ENCODE measurements at regions of chr15 and their contacts with region 1.

Region 1: GRCh38 chr15:100873029-100873677 is 6.5 kb upstream of the ALDH1A3 start:
- DNase-seq: peak; percentile 71 to 77
- H3K4me3 ChIP-seq: no peak overlapping the region
- H3K4me3 Mint-ChIP-seq: no peak overlapping the region
- H3K27ac Mint-ChIP-seq: no peak overlapping the region
- H3K4me1 ChIP-seq: peaks cover 8% of the 10 kb centered on the region; the same call in 1 of the 2 replicates
- H3K4me1 Mint-ChIP-seq: peaks cover 5% of the 10 kb centered on the region
- H3K27me3 ChIP-seq: no peaks in the 10 kb centered on the region
- H3K27me3 Mint-ChIP-seq: no peaks in the 10 kb centered on the region
- CTCF ChIP-seq: peak; percentile 70 to 82

Region 2: GRCh38 chr15:100663086-100663914 is 209.9 kb before region 1 on chr15:
- CTCF ChIA-PET with region 1: interaction called, 3 read pairs
- POLR2A ChIA-PET with region 1: no interaction called
- intact Hi-C with region 1: loop called (anchors 2 kb)
- DNase-seq: peak in 1 of 2 experiments; percentile 25
- H3K4me3 ChIP-seq: no peak overlapping the region
- H3K4me3 Mint-ChIP-seq: no peak overlapping the region
- H3K27ac Mint-ChIP-seq: no peak overlapping the region
- H3K4me1 ChIP-seq: no peaks in the 10 kb centered on the region
- H3K4me1 Mint-ChIP-seq: no peaks in the 10 kb centered on the region
- H3K27me3 ChIP-seq: no peaks in the 10 kb centered on the region
- H3K27me3 Mint-ChIP-seq: no peaks in the 10 kb centered on the region
- CTCF ChIP-seq: peak; percentile 23 to 47

Region 3: DNA sequence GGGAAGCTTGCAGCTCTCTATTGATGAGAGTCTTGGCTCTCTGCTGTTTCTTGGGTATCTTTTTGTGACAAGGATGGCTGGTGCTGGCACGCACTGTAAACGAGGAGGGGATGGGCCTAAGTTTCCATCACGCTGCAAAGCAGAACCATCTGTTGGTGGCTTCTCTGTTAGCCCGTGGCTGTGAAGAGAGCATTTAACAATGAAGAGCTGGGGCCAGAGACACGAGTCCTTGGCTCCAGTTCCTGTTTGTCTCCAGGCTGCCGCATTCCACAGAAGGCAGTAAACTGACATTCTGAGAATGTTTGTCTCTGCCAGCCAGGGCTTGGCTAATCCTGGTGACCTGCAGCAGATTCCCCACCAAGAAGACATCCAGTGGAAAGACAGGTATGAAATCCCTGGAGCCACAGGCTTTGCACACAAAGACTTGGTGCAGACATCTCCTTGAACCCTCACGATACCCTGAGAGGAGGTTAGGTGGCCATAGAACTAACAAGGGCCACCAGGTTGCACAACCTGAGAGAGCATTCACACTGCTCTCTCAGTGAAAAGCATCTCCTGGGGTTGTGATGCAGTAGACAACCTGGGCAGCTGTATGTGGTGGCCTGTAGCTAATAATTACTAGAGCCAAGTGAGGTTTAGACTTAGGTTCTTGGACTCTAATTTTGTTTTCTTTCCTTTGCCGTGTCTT is 139.9 kb before region 1 on chr15:
- CTCF ChIA-PET with region 1: interaction called, 3 read pairs
- POLR2A ChIA-PET with region 1: no interaction called
- intact Hi-C with region 1: loop called (anchors 5 kb)
- DNase-seq: peak; percentile 41 to 75
- H3K4me3 ChIP-seq: no peak overlapping the region
- H3K4me3 Mint-ChIP-seq: no peak overlapping the region
- H3K27ac Mint-ChIP-seq: peak overlapping the region; percentile 94
- H3K4me1 ChIP-seq: peaks cover 23% of the 10 kb centered on the region
- H3K4me1 Mint-ChIP-seq: peaks cover 32% of the 10 kb centered on the region
- H3K27me3 ChIP-seq: no peaks in the 10 kb centered on the region
- H3K27me3 Mint-ChIP-seq: no peaks in the 10 kb centered on the region
- CTCF ChIP-seq: no peak

Region 4: DNA sequence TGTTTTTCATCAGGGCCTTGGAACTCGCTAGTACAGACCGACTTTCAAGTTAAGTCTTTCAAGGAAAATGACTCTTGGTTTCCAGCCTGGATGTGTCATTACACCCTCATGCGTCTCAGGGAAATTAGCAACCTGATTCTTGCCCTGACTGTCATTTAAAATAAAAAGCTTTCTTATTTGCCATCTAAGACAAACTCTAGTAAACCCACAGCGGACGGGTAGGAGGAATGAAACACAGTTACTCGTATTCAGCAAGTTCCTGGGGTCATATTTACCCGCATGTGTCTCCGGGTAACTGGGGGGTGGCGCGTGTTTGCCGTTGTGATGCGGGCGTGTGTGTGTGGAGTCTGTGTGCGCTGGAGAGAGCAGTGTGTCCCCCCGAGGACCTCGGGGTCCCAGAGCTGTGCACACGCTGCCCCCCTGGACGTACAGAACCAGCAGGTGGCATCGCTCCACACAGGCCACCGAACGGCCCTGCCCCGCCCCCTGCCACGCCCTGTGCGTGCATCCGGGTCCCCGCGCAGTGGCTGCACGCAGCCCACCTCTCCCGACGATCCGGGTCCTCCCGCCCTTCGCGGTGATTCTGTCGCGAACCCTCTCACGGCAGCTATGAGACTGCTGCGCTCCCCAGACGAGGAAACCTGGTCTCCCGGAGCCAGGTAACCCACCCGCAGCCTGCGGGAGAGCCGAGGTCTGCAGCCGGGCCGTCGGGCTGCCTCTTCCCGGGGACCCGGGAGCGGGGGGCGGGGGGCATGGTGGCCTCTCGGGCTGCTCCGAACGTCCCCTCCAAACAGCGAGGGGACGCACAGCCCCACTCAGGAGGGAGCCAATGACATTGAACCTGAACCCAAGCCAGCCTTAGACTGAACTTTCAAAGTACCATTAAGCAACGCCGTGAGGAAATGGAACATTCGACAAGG is 23.6 kb before region 1 on chr15:
- CTCF ChIA-PET with region 1: interaction called, 3 read pairs
- POLR2A ChIA-PET with region 1: no interaction called
- intact Hi-C with region 1: loop called (anchors 2 kb)
- DNase-seq: peak; percentile 79 to 86
- H3K4me3 ChIP-seq: peak overlapping the region; percentile 82
- H3K4me3 Mint-ChIP-seq: peak overlapping the region; percentile 80
- H3K27ac Mint-ChIP-seq: no peak overlapping the region
- H3K4me1 ChIP-seq: no peaks in the 10 kb centered on the region
- H3K4me1 Mint-ChIP-seq: peaks cover 17% of the 10 kb centered on the region
- H3K27me3 ChIP-seq: no peaks in the 10 kb centered on the region
- H3K27me3 Mint-ChIP-seq: no peaks in the 10 kb centered on the region
- CTCF ChIP-seq: peak; percentile 51 to 69